OCI-LY7 (cell line): ENCODE measurements at regions of chr12 and their contacts with region 1.

Region 1: DNA sequence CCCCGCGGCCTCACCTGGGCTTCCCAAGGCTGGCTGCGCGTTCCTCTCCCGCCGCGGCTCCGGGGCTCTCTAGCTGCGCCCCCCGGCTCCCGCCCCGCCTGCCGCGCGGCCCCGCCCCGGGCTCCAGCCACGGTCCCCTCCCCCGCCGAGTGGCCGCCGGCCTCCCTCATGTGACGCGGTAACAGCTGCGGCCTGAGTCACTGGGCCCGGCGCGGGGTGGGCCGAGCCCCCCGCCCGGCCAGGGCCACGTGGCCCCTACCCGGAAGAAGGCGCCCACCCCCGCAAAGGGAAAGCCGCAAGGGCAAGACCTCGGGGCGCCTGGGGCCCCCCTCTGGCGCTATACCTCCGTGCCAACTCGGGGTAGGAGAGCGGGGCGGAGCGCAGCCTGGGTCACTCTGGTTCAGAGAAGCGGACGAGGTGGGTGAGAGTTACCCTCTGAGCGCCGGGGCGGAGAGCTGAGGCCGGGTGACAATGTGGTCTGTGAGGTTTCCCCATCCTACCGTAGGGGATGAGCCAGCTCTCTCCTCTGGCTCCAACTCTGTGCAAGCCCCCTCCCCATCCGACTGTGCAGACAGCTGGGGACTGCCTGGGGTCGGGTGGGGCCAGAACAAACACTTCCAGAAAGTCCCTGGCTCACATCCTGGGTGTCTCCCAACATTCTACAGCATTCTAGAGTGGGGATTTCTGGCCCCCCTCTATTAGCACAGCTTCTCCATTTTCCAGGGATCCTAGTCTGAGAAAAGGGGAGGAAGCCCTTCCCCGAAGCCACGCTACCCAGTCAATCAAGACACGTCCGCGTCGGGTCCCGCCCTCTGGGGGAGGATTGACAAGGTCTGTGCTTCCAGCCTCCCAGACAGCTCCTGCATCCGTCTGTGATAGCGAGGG is at the start of gene CD63:
- DNase-seq: peak; percentile 75
- H3K4me3 ChIP-seq: peak within 1 kb of the TSS; percentile 77
- H3K27ac ChIP-seq: peak within 1 kb of the TSS; percentile 67
- H3K4me1 ChIP-seq: peaks cover 29% of the 10 kb centered on the region
- CTCF ChIP-seq: 0 out of 2 replicates have a peak, but pooled peaks have one; percentile 16
- total RNA-seq, gene CD63: 102 and 143 TPM in 2 replicates

Region 2: GRCh38 chr12:55673638-55674037 is 55.5 kb before region 1 on chr12:
- CTCF ChIA-PET with region 1: interaction called, 3 read pairs
- POLR2A ChIA-PET with region 1: interaction called, 16 read pairs
- intact Hi-C with region 1: no loop called
- DNase-seq: peak; percentile 87
- H3K4me3 ChIP-seq: peak overlapping the region; percentile 41
- H3K27ac ChIP-seq: peak overlapping the region; percentile 85
- H3K4me1 ChIP-seq: peaks cover 28% of the 10 kb centered on the region
- CTCF ChIP-seq: no peak

Region 3: GRCh38 chr12:55715833-55716581 is 13.2 kb before region 1 on chr12 and contains the start of gene BLOC1S1:
- CTCF ChIA-PET with region 1: interaction called, 8 read pairs
- POLR2A ChIA-PET with region 1: interaction called, 12 read pairs
- intact Hi-C with region 1: loop called (anchors 1 kb)
- DNase-seq: peak; percentile 97
- H3K4me3 ChIP-seq: peak within 1 kb of the TSS; percentile 77
- H3K27ac ChIP-seq: peak within 1 kb of the TSS; percentile 81
- H3K4me1 ChIP-seq: peaks cover 28% of the 10 kb centered on the region
- CTCF ChIP-seq: no peak
- total RNA-seq, gene BLOC1S1: 139 and 161 TPM in 2 replicates

Region 4: GRCh38 chr12:57229634-57230380 is 1500.6 kb after region 1 on chr12 and contains the start of gene SHMT2:
- CTCF ChIA-PET with region 1: no interaction called
- POLR2A ChIA-PET with region 1: no interaction called
- intact Hi-C with region 1: no loop called
- DNase-seq: peak; percentile 99
- H3K4me3 ChIP-seq: peak within 1 kb of the TSS; percentile 83
- H3K27ac ChIP-seq: peak within 1 kb of the TSS; percentile 61
- H3K4me1 ChIP-seq: peaks cover 66% of the 10 kb centered on the region
- CTCF ChIP-seq: no peak
- total RNA-seq, gene SHMT2: 394 and 400 TPM in 2 replicates